ENCODE measurements at regions of chr3 and their contacts with region 1.

Region 1: DNA sequence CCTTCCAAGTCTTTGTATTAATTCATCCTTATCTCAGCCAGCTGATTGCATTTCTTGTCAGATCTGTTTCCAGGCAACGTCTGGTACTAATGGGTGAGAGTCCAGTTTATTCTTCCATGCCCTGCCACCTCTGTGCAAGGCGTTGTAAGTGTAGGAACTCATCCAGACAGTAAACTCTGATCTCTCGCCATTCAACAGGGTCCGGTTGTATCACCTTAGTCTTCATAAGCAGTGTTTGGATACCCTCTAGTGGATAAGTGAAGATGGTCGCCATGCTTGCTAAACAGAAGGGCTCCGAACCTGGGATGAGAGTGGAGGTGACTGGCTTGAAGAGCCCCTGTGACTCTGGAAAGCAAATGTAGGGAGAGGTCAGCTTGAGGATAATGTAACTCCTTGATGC is 51.6 kb upstream of the CMTM7 start:
- DNase-seq: no peak
- H3K4me3 ChIP-seq: no peak overlapping the region
- H3K27ac ChIP-seq: no peak overlapping the region
- H3K4me1 ChIP-seq: no peaks in the 10 kb centered on the region
- H3K27me3 ChIP-seq: no peaks in the 10 kb centered on the region
- CTCF ChIP-seq: peak; percentile 44

Region 2: DNA sequence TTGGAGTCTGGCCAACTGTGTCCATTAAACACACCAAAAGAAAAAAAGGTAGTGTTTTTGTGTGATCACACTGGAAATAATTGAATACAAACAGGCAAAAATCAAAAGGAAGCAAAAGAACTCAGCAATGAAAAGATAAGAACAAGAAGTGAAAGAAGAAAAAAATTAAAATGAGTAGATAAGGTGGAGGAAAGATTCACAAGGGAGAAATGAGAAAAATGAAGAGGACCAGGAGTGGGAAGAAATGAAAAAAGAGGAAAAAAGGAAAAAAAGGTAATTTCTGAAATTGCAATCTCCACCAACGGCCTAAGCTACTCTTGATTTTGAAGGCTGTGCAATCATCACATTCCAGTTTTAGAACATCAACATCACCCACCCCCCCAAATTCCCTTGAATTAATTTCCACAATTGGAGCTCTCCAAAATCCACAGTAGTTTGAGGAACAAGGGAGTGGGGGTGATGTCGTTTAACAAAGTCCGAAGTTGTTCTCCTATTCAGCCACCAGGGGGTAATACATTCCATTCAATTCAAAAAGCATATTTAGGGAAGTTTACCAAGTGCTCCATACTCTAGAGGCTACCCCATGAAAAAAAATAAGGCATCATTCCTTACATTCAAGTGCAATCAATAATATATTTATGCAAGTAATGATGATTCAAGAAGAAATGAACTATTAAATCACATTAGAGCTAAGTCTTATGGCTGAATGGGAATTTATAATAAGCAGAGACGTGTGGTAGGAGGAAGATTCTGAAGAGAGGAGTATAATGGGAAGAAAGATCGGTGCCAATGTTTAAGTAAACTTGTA is 321.1 kb before region 1 on chr3:
- CTCF ChIA-PET with region 1: no interaction called
- POLR2A ChIA-PET with region 1: no interaction called
- intact Hi-C with region 1: loop called (anchors 2 kb)
- DNase-seq: peak in 1 of 2 experiments; percentile 39
- H3K4me3 ChIP-seq: no peak overlapping the region
- H3K27ac ChIP-seq: no peak overlapping the region
- H3K4me1 ChIP-seq: no peaks in the 10 kb centered on the region
- H3K27me3 ChIP-seq: no peaks in the 10 kb centered on the region
- CTCF ChIP-seq: peak; percentile 75

Region 3: GRCh38 chr3:32184187-32184730 is 155.8 kb before region 1 on chr3:
- CTCF ChIA-PET with region 1: no interaction called
- POLR2A ChIA-PET with region 1: no interaction called
- intact Hi-C with region 1: no loop called
- DNase-seq: no peak
- H3K4me3 ChIP-seq: no peak overlapping the region
- H3K27ac ChIP-seq: no peak overlapping the region
- H3K4me1 ChIP-seq: no peaks in the 10 kb centered on the region
- H3K27me3 ChIP-seq: no peaks in the 10 kb centered on the region
- CTCF ChIP-seq: no peak

Region 4: DNA sequence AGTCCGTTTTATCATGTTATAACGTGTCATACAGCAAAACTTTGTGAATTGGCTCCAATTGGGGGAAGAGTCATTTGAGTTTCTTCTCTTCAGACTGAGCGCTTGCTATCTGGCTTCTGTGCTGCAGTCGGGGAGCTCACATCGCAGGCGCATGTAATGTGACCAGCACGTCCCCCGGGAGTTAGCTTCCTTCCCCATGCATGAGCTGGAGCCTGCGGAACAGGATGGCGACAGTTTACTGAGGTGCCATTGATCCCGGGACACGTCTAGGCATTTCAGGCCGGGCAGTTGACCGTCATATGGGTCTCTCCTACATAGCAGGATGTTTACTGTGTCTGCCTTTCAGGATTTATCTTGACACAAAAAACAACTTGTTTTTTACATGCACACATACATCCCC is 56.7 kb before region 1 on chr3:
- CTCF ChIA-PET with region 1: no interaction called
- POLR2A ChIA-PET with region 1: no interaction called
- intact Hi-C with region 1: no loop called
- DNase-seq: no peak
- H3K4me3 ChIP-seq: no peak overlapping the region
- H3K27ac ChIP-seq: no peak overlapping the region
- H3K4me1 ChIP-seq: peaks cover 14% of the 10 kb centered on the region
- H3K27me3 ChIP-seq: no peaks in the 10 kb centered on the region
- CTCF ChIP-seq: no peak

Measured in PC-9 (cell line).